Activated T-helper 2 cell treated with anti-CD3 and anti-CD28 coated beads, Interferon-gamma antibody, Interleukin-2, Interleukin-4, amounts not matched to agents 10 μg/mL and 5 μg/mL and 100 μg/mL, durations not matched to agents 14 hours and 24 hours and 36 hours (primary cell): ENCODE measurements at regions of chr1 and their contacts with region 1.

Region 1: DNA sequence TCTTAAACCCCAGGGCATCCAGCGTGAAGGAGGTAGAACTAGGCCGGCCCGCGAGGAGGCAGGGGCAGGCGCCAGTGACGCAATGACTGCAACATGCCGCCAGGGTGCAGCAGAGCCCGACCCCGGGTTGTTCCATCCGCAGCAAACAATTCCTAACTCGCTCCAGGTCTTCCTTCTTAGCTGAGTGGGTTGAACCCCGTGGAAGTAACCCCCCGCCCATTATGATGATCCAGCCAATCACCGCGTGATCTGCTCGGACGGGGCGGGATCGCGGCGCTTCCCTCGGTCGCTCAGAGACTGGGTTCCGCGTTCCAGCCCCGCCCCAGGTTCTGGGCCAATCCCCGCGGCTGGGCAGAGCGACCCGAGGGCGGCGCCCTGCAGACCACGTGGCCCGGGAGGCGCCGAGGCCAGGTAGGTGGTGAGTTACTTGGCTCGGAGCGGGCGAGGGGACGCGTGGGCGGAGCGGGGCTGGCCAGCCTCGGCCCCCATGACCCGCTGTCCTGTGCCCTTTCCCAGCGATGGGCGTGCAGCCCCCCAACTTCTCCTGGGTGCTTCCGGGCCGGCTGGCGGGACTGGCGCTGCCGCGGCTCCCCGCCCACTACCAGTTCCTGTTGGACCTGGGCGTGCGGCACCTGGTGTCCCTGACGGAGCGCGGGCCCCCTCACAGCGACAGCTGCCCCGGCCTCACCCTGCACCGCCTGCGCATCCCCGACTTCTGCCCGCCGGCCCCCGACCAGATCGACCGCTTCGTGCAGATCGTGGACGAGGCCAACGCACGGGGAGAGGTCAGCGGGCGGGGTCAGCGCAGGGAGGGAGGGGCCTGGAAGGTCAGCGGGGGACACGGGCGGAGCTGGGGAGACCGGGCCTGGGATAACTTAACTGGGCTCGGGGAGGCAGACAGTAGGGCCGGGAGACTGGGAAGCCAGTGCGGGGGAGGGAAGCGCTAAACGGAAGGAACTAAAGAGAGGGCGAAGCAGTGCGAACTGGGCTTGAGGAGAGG is at the start of gene DUSP23:
- DNase-seq: peak; percentile 96
- H3K4me3 Mint-ChIP-seq: peak within 1 kb of the TSS; percentile 73
- H3K27ac Mint-ChIP-seq: peak within 1 kb of the TSS; percentile 39
- H3K4me1 Mint-ChIP-seq: peaks cover 7% of the 10 kb centered on the region
- H3K27me3 Mint-ChIP-seq: peaks cover 18% of the 10 kb centered on the region
- total RNA-seq, gene DUSP23: 26.2 and 32.6 TPM in 2 replicates

Region 2: GRCh38 chr1:158989424-158989823 is 791.5 kb before region 1 on chr1:
- intact Hi-C with region 1: no loop called
- DNase-seq: no peak
- H3K4me3 Mint-ChIP-seq: no peak overlapping the region
- H3K27ac Mint-ChIP-seq: no peak overlapping the region
- H3K4me1 Mint-ChIP-seq: no peaks in the 10 kb centered on the region
- H3K27me3 Mint-ChIP-seq: peaks cover 1% of the 10 kb centered on the region

Region 3: DNA sequence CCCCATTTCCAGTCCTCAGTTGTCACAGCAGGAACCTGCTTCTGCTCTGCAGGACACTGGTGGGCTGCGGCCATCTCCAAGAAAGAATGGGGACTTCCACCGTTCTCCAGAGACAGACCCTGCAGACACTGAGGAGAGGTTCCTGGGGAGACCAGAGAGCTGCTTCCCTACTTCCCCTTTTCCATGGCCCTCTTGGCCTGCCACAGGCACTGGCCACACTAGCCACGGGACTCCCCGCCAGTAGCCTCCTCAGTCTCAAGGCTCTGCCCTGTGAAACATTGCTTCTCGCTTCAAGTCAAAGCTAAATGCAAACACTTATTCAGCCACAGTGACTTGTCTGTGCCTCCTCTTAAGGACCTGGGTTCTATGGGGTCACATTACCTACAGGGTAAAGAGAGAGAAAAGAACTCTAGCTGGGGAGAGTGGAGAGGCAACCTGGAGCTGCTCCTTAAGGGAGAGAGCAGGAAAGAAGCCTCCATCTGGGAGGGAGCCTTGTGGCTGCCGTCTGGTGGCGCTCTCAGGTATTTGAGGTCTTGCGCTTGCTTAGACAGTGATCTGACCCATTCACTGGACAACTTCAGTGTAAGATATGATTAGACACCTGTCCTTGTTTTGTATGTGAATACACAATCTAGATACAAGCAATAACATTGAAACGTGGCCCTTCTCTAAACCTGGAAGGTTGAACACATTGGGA is 40.4 kb after region 1 on chr1:
- intact Hi-C with region 1: loop called (anchors 5 kb)
- DNase-seq: no peak
- H3K4me3 Mint-ChIP-seq: no peak overlapping the region
- H3K27ac Mint-ChIP-seq: no peak overlapping the region
- H3K4me1 Mint-ChIP-seq: peaks cover 16% of the 10 kb centered on the region
- H3K27me3 Mint-ChIP-seq: peaks cover 10% of the 10 kb centered on the region

Region 4: GRCh38 chr1:159854693-159855192 is 73.9 kb after region 1 on chr1:
- intact Hi-C with region 1: loop called (anchors 1 kb)
- DNase-seq: peak; percentile 69
- H3K4me3 Mint-ChIP-seq: peak overlapping the region; percentile 85
- H3K27ac Mint-ChIP-seq: peak overlapping the region; percentile 62
- H3K4me1 Mint-ChIP-seq: peaks cover 15% of the 10 kb centered on the region
- H3K27me3 Mint-ChIP-seq: peaks cover 19% of the 10 kb centered on the region

Region 5: DNA sequence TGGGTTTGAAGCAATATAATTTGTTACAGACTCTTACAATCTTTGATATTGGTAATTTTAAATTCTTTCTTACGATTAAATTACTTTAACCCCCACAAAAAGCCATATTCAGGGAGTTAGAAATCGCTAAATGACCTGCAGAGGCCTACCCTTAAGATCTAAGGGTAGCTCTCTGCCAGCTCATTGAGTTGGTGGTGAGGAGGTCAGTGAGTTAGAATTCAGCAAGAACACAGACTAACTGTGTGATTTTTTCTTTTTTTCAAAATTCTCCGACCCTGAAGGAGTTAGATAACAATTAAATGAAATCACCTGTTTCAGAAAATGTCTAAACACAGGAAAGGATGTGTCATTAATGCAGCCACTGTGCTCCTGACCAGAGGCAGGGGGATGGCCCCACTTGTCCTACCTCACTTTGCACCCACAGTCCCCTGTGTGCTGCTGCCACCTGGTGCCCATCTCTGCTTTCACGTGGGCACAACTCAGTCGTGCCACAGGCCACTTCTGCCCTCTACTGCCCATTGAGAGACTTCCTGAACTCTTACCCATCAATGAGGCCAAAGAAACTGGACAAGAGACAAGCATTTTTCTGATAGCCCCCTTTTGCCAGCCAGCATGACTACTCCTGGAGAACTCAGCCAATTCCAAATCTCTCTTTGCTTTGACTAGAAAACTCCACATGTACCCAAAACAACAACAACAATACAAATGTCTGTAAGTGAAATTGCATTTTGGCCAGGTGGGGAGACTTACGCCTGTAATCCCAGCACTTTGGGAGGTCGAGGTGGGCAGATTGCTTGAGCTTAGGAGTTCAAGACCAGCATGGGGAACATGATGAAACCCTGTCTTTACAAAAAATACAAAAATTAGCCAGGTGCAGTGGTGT is 110.6 kb after region 1 on chr1:
- intact Hi-C with region 1: loop called (anchors 1 kb)
- DNase-seq: peak; percentile 47
- H3K4me3 Mint-ChIP-seq: no peak overlapping the region
- H3K27ac Mint-ChIP-seq: no peak overlapping the region
- H3K4me1 Mint-ChIP-seq: peaks cover 11% of the 10 kb centered on the region
- H3K27me3 Mint-ChIP-seq: peaks cover 15% of the 10 kb centered on the region

Region 6: DNA sequence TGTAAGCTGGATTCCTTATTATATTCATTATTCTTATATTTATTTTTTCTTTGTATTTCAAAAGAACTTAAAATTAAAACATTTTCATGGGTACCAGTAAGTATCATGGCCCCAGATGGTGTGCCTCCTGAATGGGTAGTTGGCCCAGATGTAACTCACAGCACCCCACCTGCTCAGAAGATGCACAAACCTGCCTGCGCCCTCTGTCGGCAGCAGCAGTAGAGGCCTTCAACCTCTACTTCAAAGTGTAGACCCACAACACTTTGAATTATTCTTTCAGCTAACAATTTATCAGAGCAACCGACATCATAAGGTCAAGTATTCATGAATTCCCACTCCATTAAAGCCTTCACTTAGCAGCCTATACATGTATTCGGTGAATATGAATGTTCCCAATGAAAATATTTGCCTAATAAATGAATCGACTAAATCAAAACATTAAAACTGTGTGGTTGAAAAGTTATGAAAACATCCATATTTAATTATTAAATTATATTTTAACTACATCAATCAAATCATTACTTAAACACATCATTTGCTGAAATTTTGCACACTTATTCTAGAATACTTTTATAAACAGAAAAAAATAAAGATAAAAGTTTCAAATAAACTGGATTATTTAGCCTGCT is 225.5 kb after region 1 on chr1:
- intact Hi-C with region 1: loop called (anchors 2 kb)
- DNase-seq: peak; percentile 63
- H3K4me3 Mint-ChIP-seq: no peak overlapping the region
- H3K27ac Mint-ChIP-seq: no peak overlapping the region
- H3K4me1 Mint-ChIP-seq: no peaks in the 10 kb centered on the region
- H3K27me3 Mint-ChIP-seq: peaks cover 2% of the 10 kb centered on the region

Region 7: DNA sequence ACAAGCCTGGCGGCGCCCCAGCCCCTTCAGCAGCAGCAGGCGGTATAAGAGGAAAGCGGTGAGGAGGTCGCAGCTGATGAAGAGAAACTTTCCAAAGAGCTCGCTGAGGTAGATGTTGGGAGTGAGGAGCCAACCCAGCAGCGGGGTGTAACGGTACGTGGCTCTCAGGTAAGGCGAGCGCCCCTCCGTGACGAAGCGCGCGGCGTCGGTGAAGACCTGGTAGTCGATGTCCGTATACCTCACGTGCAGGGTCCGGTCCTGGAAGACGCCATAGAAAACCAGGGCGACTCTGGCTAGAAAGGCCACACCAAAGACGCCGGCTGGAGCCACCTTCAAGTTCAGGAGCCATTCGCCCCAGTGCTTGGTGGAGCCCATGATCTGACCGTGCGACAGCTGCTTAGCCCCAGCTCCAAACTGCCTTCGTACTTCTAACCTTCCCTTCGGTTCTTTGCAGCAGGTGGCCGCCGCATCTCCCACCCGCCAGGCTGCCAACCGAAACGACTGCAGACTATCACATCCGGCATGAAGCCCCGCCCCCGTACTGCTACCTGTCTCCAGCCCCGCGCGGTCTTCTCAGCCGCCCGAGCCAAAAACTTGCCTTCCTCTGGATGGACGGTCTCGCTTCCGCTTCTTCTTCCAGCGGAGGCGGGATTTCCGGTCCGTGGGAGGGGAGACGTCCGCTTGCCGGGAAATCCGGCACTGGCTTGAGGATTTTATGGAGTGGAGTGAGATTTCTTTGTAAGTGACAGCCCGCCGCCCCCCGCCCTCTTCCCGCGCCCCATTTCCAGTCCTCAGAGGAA is 250.7 kb after region 1 on chr1 and contains the start of gene PIGM:
- intact Hi-C with region 1: loop called (anchors 5 kb)
- DNase-seq: peak; percentile 91
- H3K4me3 Mint-ChIP-seq: peak within 1 kb of the TSS; percentile 92
- H3K27ac Mint-ChIP-seq: peak within 1 kb of the TSS; percentile 76
- H3K4me1 Mint-ChIP-seq: peaks cover 29% of the 10 kb centered on the region
- H3K27me3 Mint-ChIP-seq: peaks cover 5% of the 10 kb centered on the region
- total RNA-seq, gene PIGM: 6.7 and 7.1 TPM in 2 replicates